ENCODE measurements at regions of chr7 and their contacts with region 1.

Region 1: GRCh38 chr7:128425850-128426249 is 16.1 kb upstream of the IMPDH1 start:
- DNase-seq: peak; percentile 59 to 81 (median 73)
- H3K4me3 ChIP-seq: no peak overlapping the region
- H3K4me3 Mint-ChIP-seq: no peak overlapping the region
- H3K27ac ChIP-seq: no peak overlapping the region
- H3K27ac Mint-ChIP-seq: peak overlapping the region in 1 of 8 donors; percentile 25
- H3K4me1 ChIP-seq: peaks cover 4% of the 10 kb centered on the region
- H3K4me1 Mint-ChIP-seq: peaks cover 11 to 20% (median 19%) of the 10 kb centered on the region in 3 donors
- H3K27me3 ChIP-seq: no peaks in the 10 kb centered on the region
- H3K27me3 Mint-ChIP-seq: peaks cover 8 to 15% of the 10 kb centered on the region in 2 donors

Region 2: DNA sequence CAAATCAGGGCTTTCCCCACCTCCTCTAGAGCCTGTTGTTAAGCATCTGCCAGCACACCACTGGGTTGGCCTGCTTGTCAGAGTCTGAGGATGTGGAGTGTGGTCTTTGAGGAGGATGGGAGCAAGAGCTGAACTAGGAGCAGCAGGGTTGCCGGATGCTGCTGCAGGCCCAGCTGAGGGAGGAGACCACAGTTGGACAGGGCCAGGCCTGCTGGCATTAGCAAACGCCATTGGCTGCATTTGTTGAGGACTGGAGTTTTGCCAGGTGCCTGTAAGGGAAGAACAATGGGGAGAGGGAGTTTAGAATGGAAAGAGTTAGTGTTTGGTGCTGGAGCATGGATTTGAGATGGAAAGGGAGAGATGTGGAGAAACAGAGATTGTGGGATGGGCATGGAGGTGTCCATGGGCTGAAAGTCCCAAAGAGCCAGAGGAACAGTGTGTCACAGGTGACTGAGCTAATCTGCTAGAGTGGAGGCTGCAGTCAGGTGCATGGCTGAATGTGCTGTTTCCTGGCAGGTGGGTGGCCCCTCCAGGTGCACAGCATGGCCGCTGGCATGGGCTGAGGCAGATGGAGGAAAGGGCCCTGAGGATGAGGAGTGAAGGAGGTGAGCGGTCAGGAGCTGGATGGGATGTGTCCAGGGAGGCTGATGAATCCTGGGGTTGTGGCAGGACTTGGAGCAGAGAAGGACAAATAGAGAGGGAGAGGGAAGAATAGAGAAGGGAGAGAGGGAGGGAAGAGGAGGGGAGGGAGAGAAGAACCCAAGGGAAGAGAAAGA is 144.1 kb before region 1 on chr7:
- CTCF ChIA-PET with region 1: no interaction called
- POLR2A ChIA-PET with region 1: no interaction called
- DNase-seq: no peak
- H3K4me3 ChIP-seq: no peak overlapping the region
- H3K4me3 Mint-ChIP-seq: no peak overlapping the region
- H3K27ac ChIP-seq: no peak overlapping the region
- H3K27ac Mint-ChIP-seq: no peak overlapping the region
- H3K4me1 ChIP-seq: no peaks in the 10 kb centered on the region
- H3K4me1 Mint-ChIP-seq: no peaks in the 10 kb centered on the region
- H3K27me3 ChIP-seq: no peaks in the 10 kb centered on the region
- H3K27me3 Mint-ChIP-seq: no peaks in the 10 kb centered on the region

Region 3: DNA sequence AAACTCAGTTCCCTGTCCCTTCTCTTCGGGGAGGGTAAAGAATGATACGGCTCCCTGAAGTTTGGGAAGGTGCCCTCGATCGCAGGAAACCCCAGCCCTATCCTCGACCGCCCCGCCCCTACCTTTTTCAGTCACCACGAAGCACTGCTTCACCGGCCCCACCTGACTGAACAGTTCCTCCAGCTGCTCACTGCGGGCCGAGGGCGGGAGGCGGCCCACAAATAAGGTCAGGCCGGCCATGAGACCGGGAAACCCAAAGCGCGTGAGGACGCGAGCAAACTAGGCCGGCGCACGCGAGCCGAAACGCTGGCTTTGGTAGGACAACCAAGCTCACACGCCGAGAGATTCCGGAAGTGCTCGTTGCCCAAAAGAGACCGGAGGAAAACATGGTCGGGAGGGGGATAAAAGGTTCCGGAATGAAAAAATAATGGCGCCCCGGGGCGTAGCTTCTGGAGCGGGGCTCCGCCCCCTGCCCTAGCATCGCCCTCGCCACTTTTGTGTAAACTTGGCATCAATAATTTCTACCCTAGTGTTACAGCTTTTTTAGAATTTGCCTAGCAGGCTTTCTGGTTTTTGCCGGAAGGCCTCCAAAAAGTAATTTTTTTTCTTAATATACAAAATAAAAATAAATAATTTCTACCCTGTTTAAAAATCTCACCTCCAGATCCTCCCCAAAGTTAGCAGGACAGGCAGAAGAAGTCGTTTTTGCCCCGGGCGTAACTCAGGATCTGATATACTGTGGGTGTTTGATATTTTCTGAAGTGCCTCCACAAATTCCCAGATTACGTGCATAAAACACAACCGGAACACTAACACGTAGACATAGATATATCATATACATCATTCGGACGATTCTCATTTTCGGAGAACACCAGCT is 82.1 kb before region 1 on chr7 and contains the start of gene RBM28:
- CTCF ChIA-PET with region 1: interaction called, 20 read pairs
- POLR2A ChIA-PET with region 1: no interaction called
- DNase-seq: peak; percentile 71 to 90 (median 86)
- H3K4me3 ChIP-seq: peak within 1 kb of the TSS; percentile 64
- H3K4me3 Mint-ChIP-seq: peak within 1 kb of the TSS; percentile 93 to 99 (median 96)
- H3K27ac ChIP-seq: peak within 1 kb of the TSS; percentile 76
- H3K27ac Mint-ChIP-seq: peak within 1 kb of the TSS; percentile 81 to 97 (median 96)
- H3K4me1 ChIP-seq: peaks cover 26% of the 10 kb centered on the region
- H3K4me1 Mint-ChIP-seq: peaks cover 31 to 43% (median 33%) of the 10 kb centered on the region in 3 donors
- H3K27me3 ChIP-seq: no peaks in the 10 kb centered on the region
- H3K27me3 Mint-ChIP-seq: peaks cover 0 to 8% of the 10 kb centered on the region in 2 donors
- total RNA-seq, gene RBM28: 77.7 to 77.8 TPM

Region 4: DNA sequence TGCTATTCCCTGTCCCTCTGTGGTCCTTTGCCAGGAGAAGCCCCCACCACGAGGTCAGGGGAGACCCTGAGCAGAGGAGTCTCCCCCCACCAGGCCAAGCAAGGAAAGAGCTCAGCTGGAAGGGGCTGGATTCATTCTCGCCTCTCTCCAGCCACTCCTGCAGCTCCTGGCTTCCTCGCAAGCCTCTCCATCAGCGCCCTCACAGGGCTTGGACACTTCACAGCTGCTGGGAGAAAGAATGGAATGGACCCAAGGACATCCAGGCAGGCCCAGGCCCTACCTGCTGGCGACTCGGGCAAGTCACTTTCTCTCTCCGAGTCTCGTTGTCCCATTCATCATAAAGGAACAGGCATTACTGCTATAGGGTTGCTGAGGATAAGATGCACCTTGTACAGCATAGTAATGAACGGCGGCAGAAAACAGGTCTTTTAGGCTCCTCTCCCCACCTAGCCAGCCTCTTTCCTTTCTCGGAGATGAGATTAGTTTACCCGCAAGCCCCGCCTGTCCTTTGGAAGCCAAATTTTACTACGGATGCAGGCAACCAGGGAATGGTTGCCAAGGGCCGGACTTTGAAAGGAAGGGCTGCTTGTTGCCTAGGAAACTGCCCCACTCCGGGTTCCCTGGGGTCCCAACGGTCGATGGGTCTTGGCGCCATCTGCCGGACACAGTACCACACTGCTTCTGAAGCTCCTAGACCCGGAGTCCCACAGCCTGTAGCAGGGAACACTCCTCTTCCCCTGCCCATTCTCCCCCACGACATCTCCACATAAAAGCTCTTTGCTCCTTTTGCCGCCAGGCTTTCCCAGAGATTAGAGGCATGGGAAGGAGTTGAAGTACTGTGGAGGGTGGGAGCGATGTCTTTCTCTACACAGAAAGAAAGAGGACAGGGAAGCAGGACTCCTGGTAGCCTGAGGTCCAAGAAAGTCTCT is 38.4 kb before region 1 on chr7:
- CTCF ChIA-PET with region 1: interaction called, 36 read pairs
- POLR2A ChIA-PET with region 1: no interaction called
- DNase-seq: peak; percentile 42 to 69 (median 52)
- H3K4me3 ChIP-seq: no peak overlapping the region
- H3K4me3 Mint-ChIP-seq: no peak overlapping the region
- H3K27ac ChIP-seq: no peak overlapping the region
- H3K27ac Mint-ChIP-seq: peak overlapping the region in 1 of 8 donors; percentile 24
- H3K4me1 ChIP-seq: no peaks in the 10 kb centered on the region
- H3K4me1 Mint-ChIP-seq: peaks cover 0 to 4% (median 0%) of the 10 kb centered on the region in 3 donors
- H3K27me3 ChIP-seq: no peaks in the 10 kb centered on the region
- H3K27me3 Mint-ChIP-seq: no peaks in the 10 kb centered on the region

Region 5: GRCh38 chr7:128409596-128410160 is 16.2 kb before region 1 on chr7 and contains the start of gene IMPDH1:
- CTCF ChIA-PET with region 1: interaction called, 136 read pairs
- POLR2A ChIA-PET with region 1: interaction called, 5 read pairs
- DNase-seq: peak; percentile 82 to 87 (median 84)
- H3K4me3 ChIP-seq: peak within 1 kb of the TSS; percentile 94
- H3K4me3 Mint-ChIP-seq: peak within 1 kb of the TSS; percentile 88 to 97 (median 93)
- H3K27ac ChIP-seq: peak within 1 kb of the TSS; percentile 75
- H3K27ac Mint-ChIP-seq: peak within 1 kb of the TSS; percentile 84 to 98 (median 90)
- H3K4me1 ChIP-seq: peaks cover 34% of the 10 kb centered on the region
- H3K4me1 Mint-ChIP-seq: peaks cover 27 to 42% (median 34%) of the 10 kb centered on the region in 3 donors
- H3K27me3 ChIP-seq: no peaks in the 10 kb centered on the region
- H3K27me3 Mint-ChIP-seq: no peaks in the 10 kb centered on the region
- total RNA-seq, gene IMPDH1: 69.1 to 70.4 TPM

Region 6: GRCh38 chr7:128455551-128456254 is 29.9 kb after region 1 on chr7 and contains the start of gene HILPDA:
- CTCF ChIA-PET with region 1: interaction called, 139 read pairs
- POLR2A ChIA-PET with region 1: interaction called, 6 read pairs
- DNase-seq: peak; percentile 91 to 95 (median 92)
- H3K4me3 ChIP-seq: peak within 1 kb of the TSS; percentile 90
- H3K4me3 Mint-ChIP-seq: peak within 1 kb of the TSS; percentile 90 to 95 (median 92)
- H3K27ac ChIP-seq: peak within 1 kb of the TSS; percentile 93
- H3K27ac Mint-ChIP-seq: peak within 1 kb of the TSS; percentile 73 to 98 (median 96)
- H3K4me1 ChIP-seq: peaks cover 21% of the 10 kb centered on the region
- H3K4me1 Mint-ChIP-seq: peaks cover 20 to 31% (median 31%) of the 10 kb centered on the region in 3 donors
- H3K27me3 ChIP-seq: no peaks in the 10 kb centered on the region
- H3K27me3 Mint-ChIP-seq: peaks cover 5 to 9% of the 10 kb centered on the region in 2 donors
- total RNA-seq, gene HILPDA: 16.7 to 17.5 TPM

Measured in CD8-positive, alpha-beta memory T cell (primary cell).